Activated B cell treated with CpG ODN at 0.5 μM for 24 hours (primary cell): ENCODE measurements at regions of chr9 and their contacts with region 1.

Region 1: DNA sequence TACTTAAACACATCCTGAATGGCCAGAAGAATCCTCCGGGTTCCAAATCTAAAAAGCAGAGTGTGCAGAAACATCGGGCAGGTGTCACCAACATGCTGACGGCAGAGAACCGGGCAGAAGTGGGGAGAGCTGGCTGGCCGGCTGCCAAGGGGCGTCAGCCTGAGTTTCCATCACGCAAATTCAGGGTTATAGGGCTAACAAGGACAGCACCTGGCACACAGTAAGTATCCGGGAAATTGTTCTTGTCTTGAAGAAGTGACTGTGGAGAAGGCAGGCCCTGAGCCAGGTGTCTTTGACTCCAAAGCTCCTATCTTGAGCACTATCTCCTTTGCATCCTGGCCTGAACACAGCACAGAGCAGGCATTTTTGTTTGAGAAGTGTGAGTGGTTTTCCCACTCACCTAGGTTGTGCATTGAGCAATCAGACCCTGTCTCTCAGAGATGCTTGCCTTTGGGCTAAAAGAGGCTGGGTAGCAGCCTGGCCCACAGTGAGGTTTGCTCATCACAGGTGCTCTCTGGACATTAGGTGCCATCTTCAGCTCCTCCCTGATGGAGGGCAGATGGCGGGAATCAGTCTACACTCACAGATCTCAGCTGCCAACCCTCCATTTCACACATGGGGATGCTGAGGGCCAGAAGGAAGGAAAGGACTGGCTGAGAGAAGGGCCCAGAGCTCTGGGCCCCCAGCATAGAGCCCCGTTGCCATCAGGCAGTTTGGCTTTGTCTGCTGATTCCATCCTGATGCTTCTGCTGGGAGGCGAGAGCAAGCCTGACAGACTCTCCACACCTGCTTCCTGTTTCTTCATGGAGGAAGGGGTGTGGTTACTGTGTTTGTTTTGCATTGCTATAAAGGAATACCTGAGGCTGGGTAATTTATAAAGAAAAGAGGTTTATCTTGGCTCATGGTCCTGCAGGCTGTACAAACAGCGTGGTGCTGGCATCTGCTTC is 52.8 kb downstream of the WHRN start:
- DNase-seq: peak; percentile 61
- ATAC-seq: peak; percentile 35
- H3K4me3 Mint-ChIP-seq: peak overlapping the region; percentile 55
- H3K27ac Mint-ChIP-seq: peak overlapping the region; percentile 95
- H3K4me1 Mint-ChIP-seq: peaks cover 61% of the 10 kb centered on the region
- H3K27me3 Mint-ChIP-seq: no peaks in the 10 kb centered on the region
- CTCF ChIP-seq: no peak

Region 2: DNA sequence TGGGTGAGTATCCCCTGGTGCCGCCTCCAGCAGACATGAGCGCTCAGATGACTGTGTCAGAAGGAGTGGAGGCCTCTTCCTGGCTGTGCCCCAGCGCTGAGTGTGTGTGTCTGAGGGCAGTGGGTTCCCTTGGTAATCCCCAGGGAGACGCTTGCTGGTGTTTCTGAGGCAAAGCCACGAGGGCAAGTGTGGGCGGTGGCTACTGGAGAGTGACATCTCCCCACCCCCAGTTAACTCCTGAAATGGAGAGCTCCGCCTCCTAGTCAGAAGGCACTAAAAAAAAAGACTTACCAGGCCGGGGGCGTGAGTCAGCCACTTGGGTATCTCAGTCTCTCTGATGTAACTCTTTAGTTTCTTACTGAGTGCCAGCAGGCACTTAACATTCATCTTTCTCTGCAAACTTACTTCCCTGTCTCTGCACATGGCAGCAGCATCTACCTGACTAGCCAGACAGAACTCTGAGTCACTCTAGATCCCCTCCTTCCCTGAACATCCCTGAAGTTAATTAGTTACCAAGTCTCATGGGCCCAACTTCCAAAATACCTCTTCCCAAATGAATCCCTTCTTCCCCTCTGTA is 103.5 kb before region 1 on chr9:
- CTCF ChIA-PET with region 1: no interaction called
- POLR2A ChIA-PET with region 1: interaction called, 3 read pairs
- intact Hi-C with region 1: loop called (anchors 1 kb)
- DNase-seq: peak; percentile 77
- ATAC-seq: peak; percentile 94
- H3K4me3 Mint-ChIP-seq: peak overlapping the region; percentile 58
- H3K27ac Mint-ChIP-seq: peak overlapping the region; percentile 94
- H3K4me1 Mint-ChIP-seq: peaks cover 44% of the 10 kb centered on the region
- H3K27me3 Mint-ChIP-seq: no peaks in the 10 kb centered on the region
- CTCF ChIP-seq: no peak

Region 3: GRCh38 chr9:114434878-114435311 is 17.6 kb before region 1 on chr9:
- CTCF ChIA-PET with region 1: interaction called, 4 read pairs
- POLR2A ChIA-PET with region 1: no interaction called
- intact Hi-C with region 1: loop called (anchors 2 kb)
- DNase-seq: no peak
- ATAC-seq: peak; percentile 81
- H3K4me3 Mint-ChIP-seq: no peak overlapping the region
- H3K27ac Mint-ChIP-seq: no peak overlapping the region
- H3K4me1 Mint-ChIP-seq: no peaks in the 10 kb centered on the region
- H3K27me3 Mint-ChIP-seq: no peaks in the 10 kb centered on the region
- CTCF ChIP-seq: no peak

Region 4: DNA sequence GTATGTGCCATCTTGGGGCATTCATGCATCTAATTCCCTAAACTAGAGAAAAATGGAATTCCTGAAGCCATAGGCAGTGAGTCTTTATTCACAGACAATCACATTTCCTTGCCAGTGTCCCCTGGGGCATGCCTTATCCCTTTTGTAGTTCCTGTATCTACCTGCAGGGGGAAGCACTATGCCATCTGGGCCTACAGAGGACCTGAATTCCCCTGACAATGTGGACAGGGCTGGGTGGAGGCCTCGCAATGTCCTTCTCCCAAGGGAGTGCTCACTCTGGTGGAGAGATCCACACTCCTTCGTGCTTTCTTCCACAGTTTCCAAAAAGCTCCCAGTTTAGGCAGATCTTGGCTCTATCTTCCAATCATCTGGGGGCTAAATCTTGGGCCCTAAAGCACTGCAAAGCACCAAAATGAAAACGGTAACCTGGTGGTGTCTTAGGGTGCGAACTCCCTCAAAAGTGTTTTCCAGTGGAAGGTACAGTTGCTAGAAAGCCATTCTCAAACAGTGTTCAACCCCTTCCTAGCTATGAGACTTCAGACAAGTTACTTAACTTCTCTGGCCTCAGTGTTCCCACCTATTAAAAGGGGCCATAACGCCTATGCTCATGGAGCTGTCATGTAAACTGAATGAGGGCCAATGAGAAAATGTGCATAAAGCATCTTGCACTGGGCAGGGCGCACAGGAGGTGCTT is 35.3 kb after region 1 on chr9:
- CTCF ChIA-PET with region 1: no interaction called
- POLR2A ChIA-PET with region 1: interaction called, 7 read pairs
- intact Hi-C with region 1: loop called (anchors 2 kb)
- DNase-seq: no peak
- ATAC-seq: peak; percentile 85
- H3K4me3 Mint-ChIP-seq: no peak overlapping the region
- H3K27ac Mint-ChIP-seq: no peak overlapping the region
- H3K4me1 Mint-ChIP-seq: peaks cover 39% of the 10 kb centered on the region
- H3K27me3 Mint-ChIP-seq: no peaks in the 10 kb centered on the region
- CTCF ChIP-seq: peak; percentile 41

Region 5: DNA sequence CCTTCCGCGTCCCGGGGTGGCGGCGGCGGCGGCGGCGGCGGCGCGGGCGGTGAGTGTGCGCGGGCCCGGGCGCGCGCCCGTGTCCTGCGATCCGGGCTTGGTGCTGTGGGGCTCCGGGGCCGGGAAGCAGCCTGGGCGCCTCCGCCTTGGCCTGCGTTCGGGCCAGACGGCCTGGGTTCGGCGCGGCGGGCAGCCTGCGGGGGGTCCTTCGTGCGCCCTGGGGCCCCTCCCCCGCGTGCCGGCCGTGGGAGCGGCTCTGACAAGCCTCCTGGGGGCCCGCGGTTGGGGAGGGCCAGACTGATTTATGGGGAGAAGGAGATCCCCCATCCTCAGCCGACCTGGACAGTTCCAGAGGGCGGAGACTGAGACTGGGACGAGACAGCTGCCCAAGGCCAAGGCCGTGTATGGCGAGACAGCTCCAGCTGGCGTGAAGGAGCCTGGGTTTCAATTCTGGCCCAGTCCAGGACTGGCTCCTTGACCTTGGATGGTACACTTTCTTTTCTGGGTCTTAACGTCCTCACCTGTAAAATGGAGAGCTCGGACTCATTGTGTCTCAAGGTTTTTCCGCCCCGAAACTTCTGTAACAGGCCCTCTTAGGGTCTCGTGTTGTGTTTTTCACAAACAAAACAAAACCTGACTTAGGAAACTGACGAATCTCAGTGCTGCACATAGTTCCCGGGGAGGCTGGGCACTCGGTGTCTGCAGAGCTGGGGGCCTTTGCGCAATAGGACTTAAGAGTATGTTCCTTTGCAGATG is 159.2 kb after region 1 on chr9:
- CTCF ChIA-PET with region 1: no interaction called
- POLR2A ChIA-PET with region 1: interaction called, 8 read pairs
- intact Hi-C with region 1: loop called (anchors 2 kb)
- DNase-seq: no peak
- ATAC-seq: peak; percentile 51
- H3K4me3 Mint-ChIP-seq: peak overlapping the region; percentile 90
- H3K27ac Mint-ChIP-seq: peak overlapping the region; percentile 95
- H3K4me1 Mint-ChIP-seq: peaks cover 85% of the 10 kb centered on the region
- H3K27me3 Mint-ChIP-seq: no peaks in the 10 kb centered on the region
- CTCF ChIP-seq: no peak

Region 6: GRCh38 chr9:114852050-114852594 is 399.6 kb after region 1 on chr9:
- CTCF ChIA-PET with region 1: no interaction called
- POLR2A ChIA-PET with region 1: no interaction called
- intact Hi-C with region 1: no loop called
- DNase-seq: no peak
- ATAC-seq: no peak
- H3K4me3 Mint-ChIP-seq: no peak overlapping the region
- H3K27ac Mint-ChIP-seq: no peak overlapping the region
- H3K4me1 Mint-ChIP-seq: no peaks in the 10 kb centered on the region
- H3K27me3 Mint-ChIP-seq: peaks cover 5% of the 10 kb centered on the region
- CTCF ChIP-seq: no peak